ENCODE measurements at regions of chr2 and their contacts with region 1.

Region 1: DNA sequence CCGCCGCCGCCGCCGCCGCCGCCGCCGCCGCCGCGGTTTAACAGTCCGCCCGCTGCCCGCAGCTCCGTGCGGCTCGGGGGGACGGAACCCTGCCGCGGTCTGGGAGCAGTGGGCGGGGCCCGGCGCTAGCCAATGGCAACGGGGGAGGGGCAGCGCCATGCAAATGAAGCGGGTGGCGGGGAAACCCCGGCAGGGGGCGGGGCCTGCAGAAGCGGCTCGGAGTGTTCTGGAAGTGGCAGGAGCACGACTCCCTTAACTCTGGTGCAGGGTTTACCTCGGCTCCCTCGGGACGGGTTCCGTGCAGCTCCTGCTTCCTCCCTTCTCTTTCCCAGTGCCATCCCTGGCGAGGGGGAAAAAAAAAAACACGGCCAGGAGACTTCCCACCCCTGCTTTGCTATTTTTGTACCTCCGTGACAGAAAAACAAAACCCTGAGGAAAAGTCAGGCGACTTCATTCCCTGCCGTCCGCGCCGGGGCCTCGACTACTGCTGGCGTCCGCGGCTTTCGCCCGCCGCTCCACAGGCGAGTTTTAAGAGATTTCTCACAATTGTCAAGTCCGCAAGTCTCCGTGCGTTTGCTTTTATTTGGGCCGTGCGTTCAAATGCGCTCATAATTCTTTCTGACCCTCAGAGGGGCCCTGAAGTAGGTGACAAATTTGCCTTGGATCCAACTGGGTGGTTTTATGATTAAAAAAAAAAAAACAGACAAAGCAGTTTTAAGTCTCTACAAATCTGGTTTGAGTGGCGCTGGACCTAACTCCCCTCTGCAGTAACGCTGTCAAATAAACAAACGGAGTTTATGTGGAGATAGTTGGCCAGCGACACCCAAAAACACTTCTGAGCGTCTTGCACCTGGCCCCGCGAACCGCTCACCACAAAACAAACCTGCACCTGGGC is at the start of gene KANSL1L:
- DNase-seq: peak; percentile 98 to 99 (median 98)
- H3K4me3 ChIP-seq: peak within 1 kb of the TSS; percentile 69 to 95 (median 86)
- H3K27ac ChIP-seq: peak within 1 kb of the TSS; percentile 95 to 100 (median 100)
- H3K27me3 ChIP-seq: no peaks in the 10 kb centered on the region
- CTCF ChIP-seq: peak in 11 of 56 donors; percentile 3 to 30 (median 13)
- total RNA-seq, gene KANSL1L: 23.3 to 64.1 (median 36.9) TPM

Region 2: GRCh38 chr2:210002158-210003157 is 169.1 kb before region 1 on chr2 and contains the start of gene RPE:
- intact Hi-C with region 1: loop called (anchors 2 to 5 kb)
- DNase-seq: peak; percentile 88 to 96 (median 93)
- H3K4me3 ChIP-seq: peak within 1 kb of the TSS; percentile 69 to 100 (median 94)
- H3K27ac ChIP-seq: peak within 1 kb of the TSS in 57 of 59 donors; percentile 17 to 94 (median 83)
- H3K27me3 ChIP-seq: no peaks in the 10 kb centered on the region
- CTCF ChIP-seq: peak in 27 of 56 donors; percentile 11 to 52 (median 25)
- total RNA-seq, gene RPE: 36.5 to 92.4 (median 69.9) TPM

Region 3: GRCh38 chr2:210007895-210008294 is 163.7 kb before region 1 on chr2:
- intact Hi-C with region 1: loop called (anchors 2 to 5 kb)
- DNase-seq: no peak
- H3K4me3 ChIP-seq: no peak overlapping the region
- H3K27ac ChIP-seq: peak overlapping the region in 1 of 59 donors; percentile 20
- H3K27me3 ChIP-seq: no peaks in the 10 kb centered on the region
- CTCF ChIP-seq: no peak

Region 4: GRCh38 chr2:210072922-210073509 is 98.5 kb before region 1 on chr2:
- intact Hi-C with region 1: loop called in 1 of 2 experiments (anchors 10 kb)
- DNase-seq: no peak
- H3K4me3 ChIP-seq: no peak overlapping the region
- H3K27ac ChIP-seq: no peak overlapping the region
- H3K27me3 ChIP-seq: no peaks in the 10 kb centered on the region
- CTCF ChIP-seq: peak in 55 of 56 donors; percentile 31 to 74 (median 58)

Region 5: GRCh38 chr2:210250622-210251021 is 79.1 kb after region 1 on chr2:
- intact Hi-C with region 1: no loop called
- DNase-seq: no peak
- H3K4me3 ChIP-seq: no peak overlapping the region
- H3K27ac ChIP-seq: no peak overlapping the region
- H3K27me3 ChIP-seq: no peaks in the 10 kb centered on the region
- CTCF ChIP-seq: no peak

Region 6: GRCh38 chr2:210309548-210310233 is 138.1 kb after region 1 on chr2:
- intact Hi-C with region 1: no loop called
- DNase-seq: no peak
- H3K4me3 ChIP-seq: no peak overlapping the region
- H3K27ac ChIP-seq: no peak overlapping the region
- H3K27me3 ChIP-seq: peaks cover 0 to 6% (median 0%) of the 10 kb centered on the region in 45 donors
- CTCF ChIP-seq: no peak